PC-9 (cell line): ENCODE measurements at regions of chr9 and their contacts with region 1.

Region 1: DNA sequence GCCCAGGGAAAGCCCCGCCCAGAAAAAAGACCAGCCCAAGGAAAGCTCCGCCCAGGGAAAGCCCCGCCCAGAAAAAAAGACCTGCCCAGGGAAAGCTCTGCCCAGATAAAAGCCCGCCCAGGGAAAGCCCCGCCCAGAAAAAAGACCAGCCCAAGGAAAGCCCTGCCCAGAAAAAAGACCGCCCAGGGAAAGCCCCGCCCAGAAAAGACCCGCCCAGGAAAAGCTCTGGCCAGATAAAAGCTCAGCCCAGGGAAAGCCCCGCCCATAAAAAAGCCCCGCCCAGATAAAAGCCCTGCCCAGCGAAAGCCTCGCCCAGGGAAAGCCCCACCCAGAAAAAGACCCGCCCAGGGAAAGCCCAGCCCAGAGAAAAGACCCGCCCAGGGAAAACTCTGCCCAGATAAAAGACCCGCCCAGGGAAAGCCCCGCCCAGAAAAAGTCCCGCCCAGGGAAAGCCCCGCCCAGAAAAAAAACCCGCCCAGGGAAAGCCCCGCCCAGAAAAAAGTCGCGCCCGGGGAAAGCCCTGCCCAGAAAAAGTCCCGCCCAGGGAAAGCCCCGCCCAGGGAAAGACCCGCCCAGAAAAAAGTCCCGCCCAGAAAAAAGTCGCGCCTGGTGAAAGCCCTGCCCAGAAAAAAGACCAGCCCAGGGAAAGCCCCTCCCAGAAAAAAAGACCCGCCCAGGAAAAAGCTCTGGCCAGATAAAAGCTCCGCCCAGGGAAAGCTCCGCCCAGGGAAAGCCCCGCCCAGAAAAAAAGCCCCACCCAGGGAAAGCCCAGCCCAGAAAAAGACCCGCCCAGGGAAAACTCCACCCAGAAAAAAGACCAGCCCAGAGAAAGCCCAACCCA is 11.9 kb downstream of the GRIN1 start:
- DNase-seq: peak; percentile 76 to 85
- H3K4me3 ChIP-seq: no peak overlapping the region
- H3K27ac ChIP-seq: no peak overlapping the region
- H3K4me1 ChIP-seq: peaks cover 11% of the 10 kb centered on the region
- H3K27me3 ChIP-seq: no peaks in the 10 kb centered on the region
- CTCF ChIP-seq: no peak

Region 2: DNA sequence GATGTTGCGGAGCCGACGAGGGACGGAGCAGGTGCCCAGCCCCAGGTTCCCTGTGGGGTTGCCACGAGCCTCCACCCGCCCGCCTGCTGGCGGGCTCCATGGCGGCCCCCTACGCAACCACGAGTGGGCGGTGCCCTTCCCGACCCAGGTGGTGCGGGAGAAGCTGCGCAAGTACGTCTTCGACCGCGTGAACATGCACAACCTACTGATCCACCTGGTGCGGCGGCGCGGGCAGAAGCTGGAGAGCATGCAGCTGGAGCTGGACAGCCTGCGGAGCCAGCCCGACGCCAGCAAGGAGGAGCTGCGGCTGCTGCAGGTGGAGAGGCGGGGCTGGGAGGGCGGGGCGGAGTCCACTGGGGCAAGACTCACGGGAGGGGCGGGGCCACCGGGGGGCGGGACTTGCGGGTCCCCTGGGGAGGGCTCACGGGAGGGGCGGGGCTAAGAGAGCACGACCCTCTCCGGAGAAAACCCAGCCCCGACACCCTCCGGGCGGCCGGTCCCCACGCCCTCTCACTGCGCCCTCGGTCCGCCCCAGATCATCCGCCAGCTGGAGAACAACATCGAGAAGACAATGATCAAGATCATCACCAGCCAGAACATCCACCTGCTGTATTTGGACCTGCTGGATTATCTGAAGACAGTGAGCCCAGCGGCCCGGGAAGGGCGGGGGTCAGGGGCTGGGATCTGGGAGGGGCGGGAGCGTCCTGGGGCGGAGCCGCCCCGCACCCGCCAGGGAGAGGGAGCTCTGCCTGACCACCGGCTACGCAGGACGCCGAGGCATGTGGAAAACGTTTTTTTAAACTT is 350.8 kb before region 1 on chr9:
- CTCF ChIA-PET with region 1: no interaction called
- POLR2A ChIA-PET with region 1: interaction called, 23 read pairs
- intact Hi-C with region 1: no loop called
- DNase-seq: peak; percentile 81 to 91
- H3K4me3 ChIP-seq: peak overlapping the region; percentile 69
- H3K27ac ChIP-seq: no peak overlapping the region
- H3K4me1 ChIP-seq: peaks cover 21% of the 10 kb centered on the region
- H3K27me3 ChIP-seq: no peaks in the 10 kb centered on the region
- CTCF ChIP-seq: no peak

Region 3: DNA sequence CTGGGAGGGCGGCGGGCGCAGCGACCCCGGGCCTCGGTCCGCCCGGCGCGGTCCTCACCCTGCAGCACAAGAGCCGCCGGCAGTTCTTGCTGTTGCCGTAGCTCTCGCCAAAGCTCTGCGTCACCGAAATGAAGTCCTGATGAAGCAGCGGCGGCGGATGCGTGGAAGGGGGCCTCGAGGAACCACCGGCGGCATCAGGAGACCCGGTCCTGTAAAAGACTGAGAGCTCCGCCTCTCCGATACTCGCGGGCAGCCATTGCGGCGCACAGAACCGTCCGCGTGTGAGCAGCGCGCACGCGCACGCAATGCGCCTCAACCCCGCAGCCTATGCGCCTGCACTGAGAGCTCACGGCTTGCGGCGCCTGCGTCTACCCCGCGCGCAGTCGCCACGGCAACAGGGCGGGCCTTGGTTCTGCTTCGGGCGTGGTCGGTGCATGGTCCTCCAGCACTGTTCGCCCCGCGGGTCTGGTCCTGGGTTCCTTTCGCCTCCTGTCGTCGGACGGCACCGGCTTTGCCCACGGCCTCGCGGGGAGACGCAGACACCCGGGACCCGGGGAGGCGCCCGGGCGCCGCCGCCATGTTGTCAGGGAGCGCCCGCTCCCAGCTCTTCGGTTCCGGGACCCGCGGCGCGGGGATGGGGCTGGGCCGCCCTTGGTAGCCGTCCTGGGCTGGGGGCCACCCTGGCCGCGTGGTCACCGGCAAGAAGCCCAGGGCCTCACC is 21.2 kb before region 1 on chr9:
- CTCF ChIA-PET with region 1: interaction called, 6 read pairs
- POLR2A ChIA-PET with region 1: interaction called, 12 read pairs
- intact Hi-C with region 1: no loop called
- DNase-seq: peak; percentile 76 to 93
- H3K4me3 ChIP-seq: peak overlapping the region; percentile 86
- H3K27ac ChIP-seq: peak overlapping the region; percentile 54
- H3K4me1 ChIP-seq: peaks cover 28% of the 10 kb centered on the region
- H3K27me3 ChIP-seq: no peaks in the 10 kb centered on the region
- CTCF ChIP-seq: no peak

Region 4: DNA sequence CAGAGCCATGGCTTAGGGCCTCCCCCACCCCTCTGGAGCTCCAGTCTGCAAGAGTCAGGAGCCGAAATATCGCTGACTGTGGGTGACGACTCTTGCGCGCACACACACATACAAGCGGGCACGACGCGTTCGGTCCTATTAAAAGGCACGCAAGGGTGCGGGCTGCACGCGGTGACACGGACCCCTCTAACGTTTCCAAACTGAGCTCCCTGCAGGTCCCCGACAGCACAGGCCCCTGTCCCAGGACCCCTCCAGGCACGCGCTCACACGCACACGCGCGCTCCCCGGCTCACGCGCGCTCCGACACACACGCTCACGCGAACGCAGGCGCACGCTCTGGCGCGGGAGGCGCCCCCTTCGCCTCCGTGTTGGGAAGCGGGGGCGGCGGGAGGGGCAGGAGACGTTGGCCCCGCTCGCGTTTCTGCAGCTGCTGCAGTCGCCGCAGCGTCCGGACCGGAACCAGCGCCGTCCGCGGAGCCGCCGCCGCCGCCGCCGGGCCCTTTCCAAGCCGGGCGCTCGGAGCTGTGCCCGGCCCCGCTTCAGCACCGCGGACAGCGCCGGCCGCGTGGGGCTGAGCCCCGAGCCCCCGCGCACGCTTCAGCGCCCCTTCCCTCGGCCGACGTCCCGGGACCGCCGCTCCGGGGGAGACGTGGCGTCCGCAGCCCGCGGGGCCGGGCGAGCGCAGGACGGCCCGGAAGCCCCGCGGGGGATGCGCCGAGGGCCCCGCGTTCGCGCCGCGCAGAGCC is 11.9 kb before region 1 on chr9 and contains the start of gene GRIN1:
- CTCF ChIA-PET with region 1: interaction called, 11 read pairs
- POLR2A ChIA-PET with region 1: no interaction called
- intact Hi-C with region 1: no loop called
- DNase-seq: no peak
- H3K4me3 ChIP-seq: no peak within 1 kb of the TSS
- H3K27ac ChIP-seq: no peak within 1 kb of the TSS
- H3K4me1 ChIP-seq: no peaks in the 10 kb centered on the region
- H3K27me3 ChIP-seq: peaks cover 22% of the 10 kb centered on the region; the same call in 1 of the 2 replicates
- CTCF ChIP-seq: no peak
- total RNA-seq, gene GRIN1: 0.10 TPM in 1 of 2 replicates, not detected in the other

Region 5: DNA sequence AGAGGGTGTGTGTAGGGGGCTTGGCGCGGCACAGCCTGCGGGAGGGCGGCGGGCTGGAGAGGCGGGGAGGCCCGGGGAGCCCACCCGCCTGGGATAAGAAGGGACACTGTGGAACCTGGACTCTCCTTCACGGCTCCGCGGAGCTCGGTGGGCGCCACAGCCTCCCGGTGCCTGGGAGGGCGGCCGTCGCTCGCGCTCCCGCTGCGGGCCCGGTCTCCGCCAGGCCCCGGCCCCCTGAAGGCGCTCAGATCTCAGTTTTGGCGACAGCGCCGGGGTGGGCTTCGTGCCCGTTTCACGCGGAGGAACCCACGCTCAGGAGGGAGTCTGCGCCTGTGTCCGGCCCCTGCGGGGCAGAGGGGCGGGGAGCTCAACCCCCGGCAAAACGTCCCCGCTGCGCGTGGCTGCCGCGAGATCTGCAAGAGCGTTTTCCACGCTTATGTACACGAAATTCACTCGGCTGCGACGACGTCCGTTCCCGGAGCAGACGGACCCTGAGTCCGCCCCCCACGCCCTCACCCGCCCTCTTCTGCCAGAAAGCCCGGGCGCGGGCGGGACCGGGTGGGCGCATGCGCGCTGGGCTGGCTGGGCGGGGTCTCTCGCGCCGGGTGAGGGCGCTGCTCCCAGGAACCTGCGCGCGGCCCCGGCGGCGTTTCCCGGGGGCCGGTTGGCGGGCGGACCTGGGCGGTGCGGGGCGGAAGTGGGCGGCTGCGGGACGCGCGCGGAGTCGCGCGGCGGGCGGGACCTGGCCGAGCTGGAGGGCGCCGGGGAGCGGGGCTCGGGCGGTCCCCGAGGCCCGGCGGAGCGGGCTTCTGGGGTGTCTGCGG is 104.0 kb after region 1 on chr9 and contains the start of gene NELFB:
- CTCF ChIA-PET with region 1: no interaction called
- POLR2A ChIA-PET with region 1: interaction called, 45 read pairs
- intact Hi-C with region 1: no loop called
- DNase-seq: peak; percentile 64 to 98
- H3K4me3 ChIP-seq: peak within 1 kb of the TSS; percentile 92
- H3K27ac ChIP-seq: 0 out of 2 replicates have a peak within 1 kb of the TSS, but pooled peaks have one; percentile 37
- H3K4me1 ChIP-seq: peaks cover 22% of the 10 kb centered on the region
- H3K27me3 ChIP-seq: no peaks in the 10 kb centered on the region
- CTCF ChIP-seq: no peak
- total RNA-seq, gene NELFB: 94.2 and 103 TPM in 2 replicates

Region 6: GRCh38 chr9:137277329-137278041 is 126.6 kb after region 1 on chr9 and contains the start of gene TOR4A:
- CTCF ChIA-PET with region 1: interaction called, 10 read pairs
- POLR2A ChIA-PET with region 1: no interaction called
- intact Hi-C with region 1: no loop called
- DNase-seq: peak; percentile 90 to 98
- H3K4me3 ChIP-seq: peak within 1 kb of the TSS; percentile 89
- H3K27ac ChIP-seq: peak within 1 kb of the TSS; percentile 60
- H3K4me1 ChIP-seq: peaks cover 16% of the 10 kb centered on the region
- H3K27me3 ChIP-seq: no peaks in the 10 kb centered on the region
- CTCF ChIP-seq: no peak; the same call in 1 of the 2 replicates
- total RNA-seq, gene TOR4A: 48.9 and 59.9 TPM in 2 replicates